ENCODE measurements at regions of chr3 and their contacts with region 1.

Region 1: GRCh38 chr3:16884084-16884747 is 539 bp upstream of the PLCL2 start:
- DNase-seq: peak; percentile 91
- ATAC-seq: peak; percentile 86
- H3K4me3 Mint-ChIP-seq: peak overlapping the region; percentile 75
- H3K27ac Mint-ChIP-seq: no peak overlapping the region
- H3K4me1 Mint-ChIP-seq: peaks cover 51% of the 10 kb centered on the region
- H3K27me3 Mint-ChIP-seq: peaks cover 57% of the 10 kb centered on the region
- CTCF ChIP-seq: peak; percentile 57

Region 2: GRCh38 chr3:16658004-16658920 is 226.0 kb before region 1 on chr3:
- CTCF ChIA-PET with region 1: interaction called, 13 read pairs
- POLR2A ChIA-PET with region 1: no interaction called
- DNase-seq: peak; percentile 20
- ATAC-seq: peak; percentile 81
- H3K4me3 Mint-ChIP-seq: no peak overlapping the region
- H3K27ac Mint-ChIP-seq: peak overlapping the region; percentile 82
- H3K4me1 Mint-ChIP-seq: peaks cover 80% of the 10 kb centered on the region
- H3K27me3 Mint-ChIP-seq: no peaks in the 10 kb centered on the region
- CTCF ChIP-seq: no peak

Region 3: GRCh38 chr3:16842272-16843270 is 41.6 kb before region 1 on chr3:
- CTCF ChIA-PET with region 1: interaction called, 10 read pairs
- POLR2A ChIA-PET with region 1: no interaction called
- DNase-seq: peak; percentile 16
- ATAC-seq: peak; percentile 74
- H3K4me3 Mint-ChIP-seq: no peak overlapping the region
- H3K27ac Mint-ChIP-seq: peak overlapping the region; percentile 34; the same call in 1 of the 2 replicates
- H3K4me1 Mint-ChIP-seq: peaks cover 41% of the 10 kb centered on the region
- H3K27me3 Mint-ChIP-seq: no peaks in the 10 kb centered on the region
- CTCF ChIP-seq: no peak

Region 4: GRCh38 chr3:16900779-16901440 is 16.7 kb after region 1 on chr3:
- CTCF ChIA-PET with region 1: interaction called, 17 read pairs
- POLR2A ChIA-PET with region 1: no interaction called
- DNase-seq: no peak
- ATAC-seq: no peak
- H3K4me3 Mint-ChIP-seq: no peak overlapping the region
- H3K27ac Mint-ChIP-seq: no peak overlapping the region
- H3K4me1 Mint-ChIP-seq: peaks cover 71% of the 10 kb centered on the region
- H3K27me3 Mint-ChIP-seq: no peaks in the 10 kb centered on the region
- CTCF ChIP-seq: no peak

Measured in WTC11 (cell line).